A549 (cell line): ENCODE measurements at regions of chr12 and their contacts with region 1.

Region 1: DNA sequence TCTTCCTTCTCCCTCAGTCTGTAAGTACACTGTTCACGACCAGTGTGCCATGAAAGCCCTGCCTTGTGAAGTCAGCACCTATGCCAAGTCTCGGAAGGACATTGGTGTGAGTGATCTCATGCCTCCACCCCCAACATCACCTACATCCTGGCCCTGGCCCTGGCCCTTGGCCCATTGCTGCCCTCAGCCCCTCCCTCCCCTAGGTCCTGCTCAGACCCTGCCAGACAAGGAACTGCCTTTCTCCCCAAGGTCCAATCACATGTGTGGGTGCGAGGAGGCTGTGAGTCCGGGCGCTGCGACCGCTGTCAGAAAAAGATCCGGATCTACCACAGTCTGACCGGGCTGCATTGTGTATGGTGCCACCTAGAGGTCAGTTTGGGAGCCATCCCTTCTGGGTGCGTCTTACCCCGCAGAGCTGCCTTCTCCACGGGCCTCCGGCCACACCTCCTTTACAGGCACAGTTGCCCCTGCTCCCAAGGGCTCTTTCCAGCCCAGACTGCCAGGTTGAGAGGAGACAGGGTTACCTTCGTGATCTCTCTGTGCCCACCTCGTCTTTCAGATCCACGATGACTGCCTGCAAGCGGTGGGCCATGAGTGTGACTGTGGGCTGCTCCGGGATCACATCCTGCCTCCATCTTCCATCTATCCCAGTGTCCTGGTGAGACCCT is 9.2 kb downstream of the DGKA start:
- DNase-seq: peak; percentile 87
- ATAC-seq: peak; percentile 96 to 100
- H3K4me3 ChIP-seq: no peak overlapping the region
- H3K27ac ChIP-seq: peak overlapping the region in 1 of 2 experiments; percentile 62; a peak in 3 of 6 replicates
- H3K4me1 ChIP-seq: peaks cover 8% of the 10 kb centered on the region; the same call in 1 of the 3 replicates
- CTCF ChIP-seq: peak; percentile 92
- EP300 ChIP-seq: no peak
- POLR2A ChIP-seq: no peak
- RAD21 ChIP-seq: peak; percentile 82 to 85

Region 2: GRCh38 chr12:55823419-55823818 is 116.8 kb before region 1 on chr12:
- CTCF ChIA-PET with region 1: interaction called, 17 read pairs
- POLR2A ChIA-PET with region 1: interaction called, 4 read pairs
- DNase-seq: no peak
- ATAC-seq: no peak
- H3K4me3 ChIP-seq: no peak overlapping the region
- H3K27ac ChIP-seq: peak overlapping the region; percentile 16 to 50; a peak in 5 of 6 replicates
- H3K4me1 ChIP-seq: peaks cover 53% of the 10 kb centered on the region
- CTCF ChIP-seq: no peak
- EP300 ChIP-seq: no peak
- POLR2A ChIP-seq: no peak
- RAD21 ChIP-seq: no peak

Region 3: DNA sequence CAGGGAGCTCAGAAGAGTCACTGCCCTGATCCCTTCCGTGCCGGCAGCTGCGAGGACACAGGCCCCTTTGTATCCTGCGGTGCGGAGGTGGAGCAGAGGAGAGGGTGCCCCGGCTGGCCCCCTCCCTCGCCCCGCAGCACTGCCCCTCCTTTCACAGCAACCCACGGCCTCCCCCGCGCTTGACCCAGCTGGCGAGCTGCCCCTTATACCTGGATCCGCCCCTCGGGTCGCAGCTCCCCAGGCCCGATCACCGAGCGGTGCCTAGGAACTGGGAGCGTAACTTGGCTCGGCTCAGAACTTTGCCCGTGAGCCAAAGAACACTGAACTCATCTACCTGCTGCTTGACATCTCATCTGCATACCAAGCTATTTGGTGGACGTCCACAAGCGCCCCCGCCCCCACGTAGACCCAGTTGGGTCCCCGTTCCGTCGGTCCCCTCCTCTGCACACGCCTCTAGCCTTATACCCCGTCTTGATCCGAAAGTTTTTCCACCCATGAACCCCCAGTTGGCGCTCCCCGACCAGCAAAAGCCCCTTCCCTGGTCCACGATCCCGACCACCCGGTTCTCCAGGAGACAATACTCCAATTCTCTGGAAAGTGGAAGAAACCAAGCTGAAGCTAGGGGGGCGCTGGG is 110.1 kb before region 1 on chr12:
- CTCF ChIA-PET with region 1: interaction called, 17 read pairs
- POLR2A ChIA-PET with region 1: interaction called, 7 read pairs
- DNase-seq: peak; percentile 23 to 28
- ATAC-seq: peak; percentile 65 to 74
- H3K4me3 ChIP-seq: peak overlapping the region; percentile 80
- H3K27ac ChIP-seq: peak overlapping the region; percentile 89 to 91
- H3K4me1 ChIP-seq: peaks cover 28% of the 10 kb centered on the region; the same call in 2 of the 3 replicates
- CTCF ChIP-seq: no peak
- EP300 ChIP-seq: no peak
- POLR2A ChIP-seq: peak; percentile 22; the same call in 1 of the 2 replicates
- RAD21 ChIP-seq: no peak; a peak in 1 of 5 replicates

Region 4: DNA sequence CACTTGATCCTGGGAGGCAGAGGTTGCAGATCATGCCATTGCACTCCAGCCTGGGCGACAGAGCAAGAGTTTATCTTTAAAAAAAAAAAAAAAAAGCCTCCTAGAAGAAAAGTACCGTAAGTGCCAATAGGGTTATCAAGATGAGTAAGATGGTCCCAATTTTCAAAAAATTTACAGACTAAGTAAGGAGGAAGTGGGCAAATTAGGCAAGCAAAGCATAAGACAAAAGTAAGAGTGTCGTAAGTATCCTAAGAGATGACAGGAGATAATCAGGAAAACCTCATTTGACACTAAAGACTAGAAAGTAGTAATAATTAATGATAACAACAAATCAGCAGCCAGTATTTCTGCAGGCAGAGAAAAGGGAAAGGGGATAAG is 24.7 kb before region 1 on chr12:
- CTCF ChIA-PET with region 1: interaction called, 24 read pairs
- POLR2A ChIA-PET with region 1: no interaction called
- DNase-seq: no peak
- ATAC-seq: no peak
- H3K4me3 ChIP-seq: no peak overlapping the region
- H3K27ac ChIP-seq: no peak overlapping the region
- H3K4me1 ChIP-seq: peaks cover 28% of the 10 kb centered on the region
- CTCF ChIP-seq: no peak
- EP300 ChIP-seq: no peak
- POLR2A ChIP-seq: no peak
- RAD21 ChIP-seq: no peak

Region 5: GRCh38 chr12:55926738-55927587 is 13.2 kb before region 1 on chr12:
- CTCF ChIA-PET with region 1: interaction called, 84 read pairs
- POLR2A ChIA-PET with region 1: no interaction called
- DNase-seq: peak; percentile 97
- ATAC-seq: peak; percentile 80 to 86
- H3K4me3 ChIP-seq: peak overlapping the region; percentile 89
- H3K27ac ChIP-seq: peak overlapping the region; percentile 94 to 96
- H3K4me1 ChIP-seq: peaks cover 33% of the 10 kb centered on the region
- CTCF ChIP-seq: peak; percentile 94
- EP300 ChIP-seq: no peak; a peak in 1 of 5 replicates
- POLR2A ChIP-seq: peak; percentile 62
- RAD21 ChIP-seq: peak; percentile 14 to 43; a peak in 2 of 5 replicates

Region 6: GRCh38 chr12:55955800-55956508 is 15.8 kb after region 1 on chr12:
- CTCF ChIA-PET with region 1: interaction called, 179 read pairs
- POLR2A ChIA-PET with region 1: no interaction called
- DNase-seq: peak; percentile 81 to 87
- ATAC-seq: peak; percentile 93 to 97
- H3K4me3 ChIP-seq: no peak overlapping the region
- H3K27ac ChIP-seq: no peak overlapping the region
- H3K4me1 ChIP-seq: peaks cover 9% of the 10 kb centered on the region
- CTCF ChIP-seq: peak; percentile 49
- EP300 ChIP-seq: no peak
- POLR2A ChIP-seq: no peak
- RAD21 ChIP-seq: peak; percentile 36 to 47